CD8-positive, alpha-beta T cell (primary cell): ENCODE measurements at regions of chr9 and their contacts with region 1.

Region 1: DNA sequence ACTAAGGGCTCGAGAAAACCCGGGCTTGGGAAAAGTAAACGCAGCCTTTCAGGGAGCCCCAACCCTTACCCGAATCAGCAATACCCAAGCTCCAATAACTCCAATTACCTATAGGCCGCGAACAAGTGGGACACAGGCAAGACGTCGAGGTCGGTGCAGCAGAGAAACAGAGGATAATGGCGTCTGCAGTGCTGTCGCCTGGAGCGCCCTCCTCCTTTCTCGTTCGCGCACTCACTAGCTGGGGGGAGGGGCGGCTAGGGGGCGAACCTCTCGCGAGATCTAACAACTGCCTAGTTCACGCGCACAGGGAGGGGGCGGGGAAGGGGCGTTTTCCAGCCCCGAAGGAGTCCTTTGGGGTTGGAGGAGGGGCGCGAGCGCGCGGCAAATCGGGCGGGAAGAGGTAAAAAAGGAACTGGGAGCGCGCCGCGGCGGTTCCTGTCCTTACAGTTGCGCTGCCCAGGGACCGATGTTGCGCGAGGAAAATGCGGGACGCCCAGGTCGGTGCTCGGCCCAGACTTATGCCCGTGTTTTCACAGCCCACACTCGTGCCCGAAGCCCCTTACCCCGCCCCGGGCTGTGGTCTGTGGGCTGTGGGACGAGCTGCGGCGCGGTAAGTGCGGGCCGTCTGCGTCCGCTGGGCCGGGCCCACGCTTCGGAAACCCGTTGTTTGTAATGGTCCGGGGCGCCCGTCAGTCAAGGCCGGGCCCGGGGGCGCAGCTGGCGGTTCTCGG is at the start of gene RMI1:
- DNase-seq: peak; percentile 99 to 100 (median 99)
- ATAC-seq: peak; percentile 77
- H3K4me3 ChIP-seq: peak within 1 kb of the TSS; percentile 98 to 100
- H3K4me3 Mint-ChIP-seq: peak within 1 kb of the TSS; percentile 100
- H3K27ac ChIP-seq: peak within 1 kb of the TSS; percentile 96 to 100
- H3K27ac Mint-ChIP-seq: peak within 1 kb of the TSS; percentile 98
- H3K4me1 ChIP-seq: peaks cover 31% of the 10 kb centered on the region
- H3K4me1 Mint-ChIP-seq: peaks cover 42% of the 10 kb centered on the region
- H3K27me3 ChIP-seq: no peaks in the 10 kb centered on the region
- H3K27me3 Mint-ChIP-seq: no peaks in the 10 kb centered on the region
- CTCF ChIP-seq: no peak
- total RNA-seq, gene RMI1: 0.35 to 1.1 TPM

Region 2: GRCh38 chr9:83622939-83623678 is 357.5 kb before region 1 on chr9 and contains the start of gene IDNK:
- CTCF ChIA-PET with region 1: no interaction called
- POLR2A ChIA-PET with region 1: interaction called, 3 read pairs
- intact Hi-C with region 1: loop called (anchors 1 to 5 kb)
- DNase-seq: peak; percentile 21 to 82 (median 59)
- ATAC-seq: peak; percentile 88
- H3K4me3 ChIP-seq: peak within 1 kb of the TSS; percentile 67 to 74
- H3K4me3 Mint-ChIP-seq: peak within 1 kb of the TSS; percentile 92
- H3K27ac ChIP-seq: peak within 1 kb of the TSS; percentile 78 to 82
- H3K27ac Mint-ChIP-seq: peak within 1 kb of the TSS; percentile 98
- H3K4me1 ChIP-seq: peaks cover 19% of the 10 kb centered on the region
- H3K4me1 Mint-ChIP-seq: peaks cover 33% of the 10 kb centered on the region
- H3K27me3 ChIP-seq: no peaks in the 10 kb centered on the region
- H3K27me3 Mint-ChIP-seq: no peaks in the 10 kb centered on the region
- CTCF ChIP-seq: no peak
- total RNA-seq, gene IDNK: 4.3 to 4.6 TPM

Region 3: DNA sequence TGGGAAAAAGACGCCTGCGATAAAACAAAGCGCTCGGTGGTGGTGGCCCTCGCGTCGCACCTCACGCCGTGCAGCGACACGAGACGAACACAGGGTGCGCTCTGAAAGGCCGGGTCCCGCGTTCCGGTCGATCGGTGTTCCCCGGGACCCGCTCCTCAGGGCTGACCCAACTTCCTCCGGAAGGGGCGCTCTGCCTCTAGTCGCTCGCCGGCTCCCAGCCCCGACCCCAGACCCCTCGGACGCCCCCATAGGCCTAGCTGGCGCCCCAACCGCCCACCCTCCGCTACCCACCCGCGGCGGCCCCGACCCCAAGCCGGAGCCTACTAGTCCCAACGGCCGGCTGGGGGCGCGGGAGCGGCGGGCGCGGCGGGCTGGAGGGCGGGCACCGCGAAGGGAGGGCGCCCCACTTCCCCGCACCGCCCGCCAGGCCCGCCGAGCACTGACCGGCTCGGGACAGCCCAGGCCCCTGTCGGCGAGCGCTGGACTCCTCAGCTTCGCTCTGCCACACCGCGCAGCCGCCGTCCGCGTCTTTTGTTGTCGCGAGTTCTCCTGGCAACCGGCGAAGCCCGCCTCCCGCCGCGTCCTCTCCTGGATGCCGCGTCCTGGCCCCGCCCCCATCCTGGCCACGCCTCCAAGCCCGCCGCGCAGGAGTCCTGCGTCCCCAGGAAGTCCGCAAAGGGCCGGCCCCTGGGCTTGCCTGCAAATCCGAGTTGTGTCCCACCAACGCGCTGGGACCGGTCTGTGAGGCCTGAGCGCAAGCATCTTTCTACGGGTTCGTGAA is 59.4 kb before region 1 on chr9 and contains the start of gene KIF27:
- CTCF ChIA-PET with region 1: interaction called, 3 read pairs
- POLR2A ChIA-PET with region 1: interaction called, 28 read pairs
- intact Hi-C with region 1: loop called (anchors 1 kb)
- DNase-seq: peak; percentile 93 to 98 (median 96)
- ATAC-seq: peak; percentile 84
- H3K4me3 ChIP-seq: peak within 1 kb of the TSS; percentile 64 to 86
- H3K4me3 Mint-ChIP-seq: peak within 1 kb of the TSS; percentile 96
- H3K27ac ChIP-seq: peak within 1 kb of the TSS; percentile 92 to 93
- H3K27ac Mint-ChIP-seq: peak within 1 kb of the TSS; percentile 97
- H3K4me1 ChIP-seq: peaks cover 8% of the 10 kb centered on the region
- H3K4me1 Mint-ChIP-seq: peaks cover 15% of the 10 kb centered on the region
- H3K27me3 ChIP-seq: no peaks in the 10 kb centered on the region
- H3K27me3 Mint-ChIP-seq: no peaks in the 10 kb centered on the region
- CTCF ChIP-seq: peak; percentile 58
- total RNA-seq, gene KIF27: 2.9 to 3.8 TPM

Region 4: DNA sequence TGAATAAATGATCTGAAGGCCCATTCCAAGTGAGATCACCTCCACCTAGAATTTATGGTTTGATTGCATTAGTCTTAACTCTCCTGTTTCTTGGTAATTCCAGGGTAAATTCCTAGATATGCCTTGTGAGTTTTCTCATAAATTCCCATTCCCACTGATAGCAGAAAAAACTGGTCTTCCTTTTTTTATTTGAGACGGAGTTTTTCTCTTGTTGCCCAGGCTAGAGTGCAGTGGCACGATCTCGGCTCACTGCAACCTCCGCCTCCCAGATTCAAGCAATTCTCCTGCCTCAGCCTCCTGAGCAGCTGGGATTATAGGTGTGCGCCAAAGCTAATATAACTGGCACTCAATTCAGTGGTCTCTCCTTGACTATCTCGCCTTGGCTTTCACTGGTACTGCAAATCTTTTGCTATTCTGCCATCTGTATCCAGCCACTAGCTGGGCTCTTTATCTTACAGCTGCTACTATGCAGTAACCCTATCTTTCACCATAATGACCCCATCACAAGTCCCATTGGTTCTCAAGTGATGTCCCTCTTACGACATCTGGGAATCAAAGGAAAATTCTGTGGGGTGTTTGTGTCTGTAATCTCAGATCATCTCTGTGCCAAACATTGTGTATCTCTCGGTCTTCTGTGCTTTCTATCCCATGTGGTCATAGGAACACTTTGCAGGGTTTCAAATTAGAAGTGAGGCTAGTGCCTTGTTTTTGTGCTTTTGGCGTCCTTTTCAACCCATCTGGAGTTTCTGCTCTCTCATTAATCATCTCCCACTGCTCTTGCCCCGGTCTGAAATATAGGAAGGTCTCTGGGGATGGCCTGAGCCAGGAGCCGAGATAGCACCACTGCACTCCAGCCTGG is 15.0 kb before region 1 on chr9:
- CTCF ChIA-PET with region 1: interaction called, 6 read pairs
- POLR2A ChIA-PET with region 1: interaction called, 16 read pairs
- intact Hi-C with region 1: loop called in 1 of 2 experiments (anchors 1 kb)
- DNase-seq: no peak
- ATAC-seq: peak; percentile 20
- H3K4me3 ChIP-seq: no peak overlapping the region
- H3K4me3 Mint-ChIP-seq: no peak overlapping the region
- H3K27ac ChIP-seq: no peak overlapping the region
- H3K27ac Mint-ChIP-seq: peak overlapping the region; percentile 64
- H3K4me1 ChIP-seq: no peaks in the 10 kb centered on the region
- H3K4me1 Mint-ChIP-seq: peaks cover 16% of the 10 kb centered on the region
- H3K27me3 ChIP-seq: no peaks in the 10 kb centered on the region
- H3K27me3 Mint-ChIP-seq: no peaks in the 10 kb centered on the region
- CTCF ChIP-seq: no peak

Region 5: DNA sequence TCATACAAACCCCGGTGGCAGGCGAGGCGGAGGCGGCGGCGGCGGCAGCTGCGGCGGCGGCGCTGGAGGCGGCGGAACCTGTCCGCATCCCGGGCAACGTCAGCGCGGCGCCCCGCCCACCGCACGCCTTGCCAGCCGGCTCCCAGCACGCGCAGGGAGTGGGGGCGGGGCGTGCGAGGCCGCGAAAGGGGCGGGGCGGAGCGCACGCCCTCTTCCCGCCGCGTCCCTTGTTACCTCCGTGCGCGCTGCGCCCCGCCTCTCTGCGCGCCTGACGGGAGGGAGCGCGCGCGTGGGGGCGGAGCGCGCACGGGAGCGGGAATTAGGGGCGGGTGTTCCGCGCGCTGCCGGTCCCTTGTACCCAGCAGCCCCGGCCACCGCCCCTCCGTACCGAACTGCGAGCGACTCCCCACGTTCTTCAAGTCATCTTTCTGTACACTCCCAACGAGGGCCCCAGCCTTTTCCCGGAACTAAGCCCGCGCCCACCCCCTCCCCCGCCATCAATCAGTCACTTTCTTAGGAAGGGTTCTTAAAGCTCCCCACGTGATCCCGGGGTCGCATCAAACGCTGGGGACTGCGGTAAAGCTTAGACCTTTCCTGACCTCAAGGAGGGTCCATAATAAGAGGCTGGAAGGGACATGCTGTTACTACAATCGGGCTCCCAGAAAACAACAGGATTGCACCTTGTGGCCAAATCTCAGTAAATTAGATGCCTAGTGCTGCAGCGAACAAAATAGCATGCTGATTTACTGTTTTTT is 1761.5 kb after region 1 on chr9 and contains the start of gene AGTPBP1:
- CTCF ChIA-PET with region 1: no interaction called
- POLR2A ChIA-PET with region 1: no interaction called
- intact Hi-C with region 1: loop called (anchors 1 to 5 kb)
- DNase-seq: peak; percentile 90 to 99 (median 97)
- ATAC-seq: peak; percentile 85
- H3K4me3 ChIP-seq: peak within 1 kb of the TSS; percentile 78 to 89
- H3K4me3 Mint-ChIP-seq: peak within 1 kb of the TSS; percentile 96
- H3K27ac ChIP-seq: peak within 1 kb of the TSS; percentile 83 to 93
- H3K27ac Mint-ChIP-seq: peak within 1 kb of the TSS; percentile 98
- H3K4me1 ChIP-seq: peaks cover 12% of the 10 kb centered on the region
- H3K4me1 Mint-ChIP-seq: peaks cover 40% of the 10 kb centered on the region
- H3K27me3 ChIP-seq: no peaks in the 10 kb centered on the region
- H3K27me3 Mint-ChIP-seq: no peaks in the 10 kb centered on the region
- CTCF ChIP-seq: no peak
- total RNA-seq, gene AGTPBP1: 58.3 to 58.4 TPM